ENCODE measurements at regions of chr7 and their contacts with region 1.

Region 1: GRCh38 chr7:128135515-128136214 is 104.4 kb upstream of the LRRC4 start:
- DNase-seq: peak in 1 of 2 experiments; percentile 85
- H3K4me3 ChIP-seq: peak overlapping the region; percentile 48 to 82 (median 58)
- H3K27ac ChIP-seq: no peak overlapping the region
- H3K4me1 ChIP-seq: peaks cover 0 to 4% (median 2%) of the 10 kb centered on the region in 4 experiments; a peak in 2 of 7 replicates
- H3K27me3 ChIP-seq: peaks cover 10 to 38% (median 29%) of the 10 kb centered on the region in 4 experiments
- CTCF ChIP-seq: peak; percentile 79 to 84 (median 83)
- EP300 ChIP-seq: peak in 1 of 2 experiments; percentile 94; a peak in 2 of 3 replicates
- POLR2A ChIP-seq: no peak
- RAD21 ChIP-seq: peak; percentile 41 to 80; a peak in 3 of 4 replicates

Region 2: GRCh38 chr7:128104035-128104742 is 31.5 kb before region 1 on chr7:
- CTCF ChIA-PET with region 1: interaction called, 26 read pairs
- POLR2A ChIA-PET with region 1: interaction called, 3 read pairs
- DNase-seq: no peak
- H3K4me3 ChIP-seq: peak overlapping the region; percentile 29 to 61 (median 42)
- H3K27ac ChIP-seq: no peak overlapping the region
- H3K4me1 ChIP-seq: no peaks in the 10 kb centered on the region; a peak in 4 of 7 replicates
- H3K27me3 ChIP-seq: peaks cover 13 to 39% (median 28%) of the 10 kb centered on the region in 4 experiments
- CTCF ChIP-seq: no peak
- EP300 ChIP-seq: no peak
- POLR2A ChIP-seq: no peak; a peak in 1 of 3 replicates
- RAD21 ChIP-seq: no peak; a peak in 1 of 4 replicates

Region 3: DNA sequence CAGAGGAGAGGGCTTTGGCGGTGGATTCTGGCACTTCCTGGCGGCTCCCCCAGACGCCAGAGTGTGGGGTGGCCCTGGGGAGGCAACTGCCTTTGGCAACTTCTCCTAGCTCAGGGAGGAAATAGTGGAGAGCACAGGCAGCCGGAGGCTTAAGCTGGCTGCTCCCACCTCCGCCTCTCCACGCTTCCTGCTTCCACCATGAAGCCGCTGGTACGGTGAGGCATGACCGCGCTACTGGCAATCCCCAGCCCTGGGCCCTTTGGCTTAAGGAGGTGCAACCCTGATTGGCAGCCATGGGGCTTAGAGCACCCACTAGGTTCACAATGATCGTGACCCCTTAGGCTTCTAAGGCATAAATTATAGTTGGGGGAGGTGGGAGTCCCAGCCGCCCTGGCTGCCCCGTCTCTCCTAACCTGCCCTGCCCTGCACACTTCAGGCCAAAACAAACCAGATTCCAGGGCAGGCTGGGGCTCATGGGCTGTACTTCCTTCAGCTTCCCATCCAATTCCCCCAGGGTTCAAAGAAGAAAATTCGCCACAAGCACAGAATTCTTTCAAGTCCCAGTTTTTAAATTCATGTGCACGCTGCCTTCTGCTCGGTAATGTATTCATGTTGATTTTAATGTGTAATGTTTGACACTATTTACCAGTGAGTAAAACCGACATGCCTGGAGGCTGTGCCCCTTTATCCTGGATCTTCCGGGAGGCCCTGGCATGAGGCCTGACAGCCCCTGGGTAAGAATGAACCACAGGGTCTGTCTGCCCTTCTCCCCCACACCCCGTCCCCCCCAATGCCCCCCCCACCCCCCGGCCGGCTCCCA is 13.7 kb before region 1 on chr7:
- CTCF ChIA-PET with region 1: interaction called, 35 read pairs
- POLR2A ChIA-PET with region 1: interaction called, 4 read pairs
- DNase-seq: no peak
- H3K4me3 ChIP-seq: no peak overlapping the region
- H3K27ac ChIP-seq: no peak overlapping the region
- H3K4me1 ChIP-seq: peaks cover 3 to 8% (median 4%) of the 10 kb centered on the region in 4 experiments; a peak in 6 of 7 replicates
- H3K27me3 ChIP-seq: peaks cover 0 to 4% (median 2%) of the 10 kb centered on the region in 4 experiments; a peak in 3 of 7 replicates
- CTCF ChIP-seq: no peak
- EP300 ChIP-seq: no peak
- POLR2A ChIP-seq: no peak
- RAD21 ChIP-seq: no peak

Region 4: DNA sequence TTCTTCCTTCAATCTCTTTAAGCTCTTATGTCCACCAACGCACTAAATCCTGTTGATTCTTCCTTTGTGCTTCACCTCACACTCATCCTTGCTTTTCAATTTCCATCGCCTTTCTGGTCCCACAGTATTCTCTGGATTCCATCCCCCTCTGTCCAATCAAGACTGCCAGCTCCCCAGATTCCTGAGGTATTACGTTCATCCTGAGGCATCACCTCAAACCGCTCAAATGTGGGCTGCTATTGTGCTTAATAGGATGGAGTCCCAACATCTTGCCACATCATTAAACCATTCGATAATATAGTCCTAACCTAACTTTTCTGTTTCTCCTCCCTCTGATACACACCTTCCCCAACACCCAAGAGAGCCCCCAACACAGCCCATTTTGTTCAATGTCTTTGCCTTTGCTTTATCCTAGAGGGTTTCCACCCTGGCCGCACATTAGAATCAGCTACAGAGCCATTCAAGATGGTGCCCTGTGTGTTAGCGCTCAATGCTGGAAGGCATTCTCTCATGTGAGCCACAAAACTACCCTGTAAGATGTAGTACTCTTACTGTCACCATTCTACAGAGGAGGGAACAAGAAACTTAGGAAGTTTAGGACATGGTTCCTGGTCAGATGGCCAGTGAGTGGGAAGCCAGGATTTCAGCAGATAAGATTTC is 25.9 kb after region 1 on chr7:
- CTCF ChIA-PET with region 1: interaction called, 49 read pairs
- POLR2A ChIA-PET with region 1: interaction called, 3 read pairs
- DNase-seq: peak in 1 of 2 experiments; percentile 11
- H3K4me3 ChIP-seq: no peak overlapping the region; a peak in 1 of 8 replicates
- H3K27ac ChIP-seq: no peak overlapping the region
- H3K4me1 ChIP-seq: peaks cover 3 to 18% (median 10%) of the 10 kb centered on the region in 4 experiments
- H3K27me3 ChIP-seq: peaks cover 17 to 42% (median 30%) of the 10 kb centered on the region in 4 experiments
- CTCF ChIP-seq: no peak
- EP300 ChIP-seq: no peak
- POLR2A ChIP-seq: no peak
- RAD21 ChIP-seq: no peak

Region 5: GRCh38 chr7:128190051-128190647 is 54.5 kb after region 1 on chr7:
- CTCF ChIA-PET with region 1: interaction called, 26 read pairs
- POLR2A ChIA-PET with region 1: interaction called, 3 read pairs
- DNase-seq: peak in 1 of 2 experiments; percentile 34
- H3K4me3 ChIP-seq: no peak overlapping the region
- H3K27ac ChIP-seq: no peak overlapping the region
- H3K4me1 ChIP-seq: peaks cover 0 to 8% (median 2%) of the 10 kb centered on the region in 4 experiments; a peak in 3 of 7 replicates
- H3K27me3 ChIP-seq: no peaks in the 10 kb centered on the region; a peak in 2 of 7 replicates
- CTCF ChIP-seq: no peak
- EP300 ChIP-seq: no peak
- POLR2A ChIP-seq: no peak
- RAD21 ChIP-seq: no peak

Measured in H1 (cell line).